Gastrocnemius medialis (tissue), 4 donors: ENCODE measurements at regions of chr3 and their contacts with region 1.

Region 1: DNA sequence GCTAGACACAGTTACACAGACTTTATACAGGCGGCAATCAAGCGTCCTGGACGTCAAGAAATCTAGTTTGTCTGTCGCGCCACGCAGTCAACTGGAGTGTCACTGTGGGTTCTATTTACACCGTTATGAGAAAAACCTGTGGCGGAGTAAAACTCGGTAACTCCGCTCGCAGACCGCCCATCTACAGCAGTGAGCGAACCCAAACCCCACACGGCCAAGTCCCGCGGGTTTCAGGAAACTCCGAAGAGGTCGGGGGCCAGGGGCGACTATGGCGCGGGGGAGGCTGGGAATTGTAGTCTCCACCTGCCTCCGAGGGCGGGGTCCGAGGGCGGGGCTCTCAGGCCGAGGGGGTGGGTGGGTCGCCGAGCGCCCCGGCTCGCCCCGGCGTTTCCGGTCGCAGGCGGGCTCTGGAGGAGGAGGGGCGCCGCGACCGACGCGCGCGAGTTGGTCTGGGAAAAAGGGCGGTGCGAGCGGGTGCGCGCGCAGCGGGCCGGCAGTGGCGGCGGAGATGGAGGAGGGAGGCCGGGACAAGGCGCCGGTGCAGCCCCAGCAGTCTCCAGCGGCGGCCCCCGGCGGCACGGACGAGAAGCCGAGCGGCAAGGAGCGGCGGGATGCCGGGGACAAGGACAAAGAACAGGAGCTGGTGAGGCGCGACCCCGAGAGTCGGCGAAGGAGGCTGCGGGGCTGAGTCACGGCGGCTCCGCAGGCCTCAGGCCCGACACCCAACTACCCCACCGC is at the start of gene PSMD2:
- DNase-seq: peak; percentile 97
- ATAC-seq: peak; percentile 93 to 96
- H3K4me3 ChIP-seq: peak within 1 kb of the TSS; percentile 70 to 93 (median 76)
- H3K27ac ChIP-seq: peak within 1 kb of the TSS; percentile 81 to 93 (median 86)
- H3K4me1 ChIP-seq: peaks cover 14 to 18% of the 10 kb centered on the region in 2 donors
- H3K27me3 ChIP-seq: no peaks in the 10 kb centered on the region
- CTCF ChIP-seq: peak in 1 of 5 experiments; percentile 18
- POLR2A ChIP-seq: peak; percentile 94 to 98
- total RNA-seq, gene PSMD2: 560 to 831 (median 720) TPM

Region 2: DNA sequence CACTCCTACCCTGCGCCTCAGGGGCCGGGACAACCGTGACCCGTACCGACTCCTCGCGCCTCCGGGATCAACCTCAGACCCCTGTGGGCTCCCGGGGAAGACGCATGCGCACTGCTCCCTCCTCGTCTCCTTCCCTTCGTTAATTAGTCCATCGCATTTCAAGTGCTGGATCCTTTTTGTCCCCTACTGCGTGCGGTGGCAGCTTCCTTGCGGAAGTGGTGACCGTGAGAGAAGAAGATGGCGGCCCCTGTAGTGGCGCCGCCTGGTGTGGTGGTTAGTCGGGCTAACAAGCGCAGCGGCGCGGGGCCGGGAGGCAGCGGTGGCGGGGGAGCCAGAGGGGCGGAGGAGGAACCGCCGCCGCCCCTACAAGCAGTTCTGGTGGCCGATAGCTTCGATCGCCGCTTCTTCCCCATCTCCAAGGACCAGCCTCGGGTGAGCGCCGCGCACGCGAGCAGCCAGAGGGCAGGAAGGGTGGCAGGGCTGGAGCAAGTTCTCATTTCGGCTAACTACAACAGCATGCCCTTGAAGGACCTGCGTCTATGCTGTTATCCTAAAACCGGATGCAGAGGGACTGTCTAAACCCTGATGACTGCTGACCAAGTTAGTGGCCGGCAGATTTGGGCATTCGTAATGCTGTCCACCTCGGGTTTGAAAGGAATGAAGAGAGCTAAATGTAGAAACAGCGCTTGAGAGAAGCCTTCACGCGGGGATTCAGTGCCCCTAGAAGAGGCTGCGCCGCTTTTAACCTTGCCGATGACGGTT is 163.6 kb before region 1 on chr3 and contains the start of gene EIF2B5:
- in situ Hi-C with region 1: no loop called
- intact Hi-C with region 1: loop called (anchors 2 kb)
- DNase-seq: peak; percentile 90 to 91
- ATAC-seq: peak; percentile 89 to 94
- H3K4me3 ChIP-seq: peak within 1 kb of the TSS; percentile 65 to 97 (median 80)
- H3K27ac ChIP-seq: peak within 1 kb of the TSS; percentile 88 to 97 (median 93)
- H3K4me1 ChIP-seq: peaks cover 15 to 25% of the 10 kb centered on the region in 2 donors
- H3K27me3 ChIP-seq: no peaks in the 10 kb centered on the region
- CTCF ChIP-seq: peak in 4 of 5 experiments; percentile 32 to 55 (median 47)
- POLR2A ChIP-seq: peak; percentile 70 to 72
- total RNA-seq, gene EIF2B5: 42.6 to 56.8 (median 53.4) TPM

Region 3: DNA sequence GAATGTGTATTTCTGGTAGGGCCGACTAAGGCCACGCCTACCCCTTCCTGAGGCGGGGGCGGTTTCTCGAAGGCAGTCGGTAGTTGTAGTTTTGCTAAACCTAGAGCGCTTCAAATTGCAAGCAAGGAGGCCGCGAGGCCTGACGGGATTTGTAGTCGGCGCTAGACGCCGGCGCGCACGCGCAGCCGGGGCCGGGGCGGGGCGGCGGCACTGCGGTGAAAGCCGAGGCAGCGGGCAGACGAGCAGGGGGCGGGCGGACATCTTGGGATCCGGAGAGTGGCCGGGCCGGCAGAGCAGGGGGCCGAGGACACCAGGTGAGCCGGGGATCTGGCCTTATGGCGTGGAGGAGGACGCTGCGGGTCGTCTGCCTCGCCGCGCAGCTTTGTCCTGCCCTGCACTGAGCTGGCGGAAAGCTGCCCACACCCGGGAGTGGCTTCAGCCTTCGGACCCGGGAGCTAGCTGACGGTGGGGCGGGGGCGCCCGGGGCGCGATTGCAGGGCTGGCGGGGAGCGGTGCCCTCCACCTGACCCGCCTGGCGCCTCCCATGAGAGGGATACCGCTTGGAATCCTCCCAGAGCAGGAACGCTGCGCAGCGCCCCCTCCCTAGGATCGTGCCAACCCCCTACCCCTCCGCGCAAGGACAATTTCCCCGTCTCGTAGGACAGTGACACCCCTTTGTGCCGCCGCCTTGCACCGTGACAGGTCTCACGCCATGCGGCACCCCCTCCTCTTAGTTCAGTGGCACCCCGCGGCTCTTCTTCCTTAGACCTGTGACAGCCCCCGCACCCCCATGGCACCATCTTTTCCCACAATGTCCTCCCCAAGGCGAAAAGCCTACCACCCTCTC is 124.1 kb before region 1 on chr3 and contains the start of gene AP2M1:
- in situ Hi-C with region 1: no loop called
- intact Hi-C with region 1: loop called (anchors 1 kb)
- DNase-seq: peak; percentile 98 to 100
- ATAC-seq: peak; percentile 94 to 96
- H3K4me3 ChIP-seq: peak within 1 kb of the TSS; percentile 95 to 98 (median 96)
- H3K27ac ChIP-seq: peak within 1 kb of the TSS; percentile 97 to 99 (median 98)
- H3K4me1 ChIP-seq: peaks cover 29 to 39% of the 10 kb centered on the region in 2 donors
- H3K27me3 ChIP-seq: no peaks in the 10 kb centered on the region
- CTCF ChIP-seq: peak in 1 of 5 experiments; percentile 14
- POLR2A ChIP-seq: peak; percentile 88 to 90
- total RNA-seq, gene AP2M1: 110 to 132 (median 117) TPM

Region 4: DNA sequence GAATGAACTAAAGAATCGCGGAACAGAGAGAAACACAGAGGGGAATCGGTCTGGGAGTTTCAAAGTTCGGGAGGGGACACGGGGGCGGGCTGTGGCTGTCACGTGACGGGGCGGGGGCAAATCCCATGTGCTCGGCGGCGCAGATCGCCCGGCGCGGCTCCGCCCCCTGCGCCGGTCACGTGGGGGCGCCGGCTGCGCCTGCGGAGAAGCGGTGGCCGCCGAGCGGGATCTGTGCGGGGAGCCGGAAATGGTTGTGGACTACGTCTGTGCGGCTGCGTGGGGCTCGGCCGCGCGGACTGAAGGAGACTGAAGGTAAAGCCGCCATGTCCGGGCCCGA is 15.4 kb after region 1 on chr3 and contains the start of gene EIF4G1:
- in situ Hi-C with region 1: no loop called
- intact Hi-C with region 1: loop called (anchors 1 kb)
- DNase-seq: peak; percentile 94
- ATAC-seq: peak; percentile 76 to 84
- H3K4me3 ChIP-seq: peak within 1 kb of the TSS; percentile 73 to 94 (median 90)
- H3K27ac ChIP-seq: peak within 1 kb of the TSS; percentile 92 to 100 (median 98)
- H3K4me1 ChIP-seq: peaks cover 38 to 45% of the 10 kb centered on the region in 2 donors
- H3K27me3 ChIP-seq: no peaks in the 10 kb centered on the region
- CTCF ChIP-seq: no peak
- POLR2A ChIP-seq: peak; percentile 66 to 74
- total RNA-seq, gene EIF4G1: 474 to 863 (median 735) TPM

Region 5: GRCh38 chr3:184362668-184363540 is 64.0 kb after region 1 on chr3:
- in situ Hi-C with region 1: no loop called
- intact Hi-C with region 1: loop called (anchors 1 kb)
- DNase-seq: peak; percentile 94 to 96
- ATAC-seq: peak; percentile 86 to 87
- H3K4me3 ChIP-seq: peak overlapping the region; percentile 58 to 94 (median 76)
- H3K27ac ChIP-seq: peak overlapping the region; percentile 91 to 100 (median 95)
- H3K4me1 ChIP-seq: peaks cover 17 to 23% of the 10 kb centered on the region in 2 donors
- H3K27me3 ChIP-seq: no peaks in the 10 kb centered on the region
- CTCF ChIP-seq: peak in 4 of 5 experiments; percentile 21 to 72 (median 55)
- POLR2A ChIP-seq: peak; percentile 82 to 88